Activated CD4-positive, alpha-beta memory T cell treated with anti-CD3 and anti-CD28 coated beads for 36 hours (primary cell): ENCODE measurements at regions of chr6 and their contacts with region 1.

Region 1: DNA sequence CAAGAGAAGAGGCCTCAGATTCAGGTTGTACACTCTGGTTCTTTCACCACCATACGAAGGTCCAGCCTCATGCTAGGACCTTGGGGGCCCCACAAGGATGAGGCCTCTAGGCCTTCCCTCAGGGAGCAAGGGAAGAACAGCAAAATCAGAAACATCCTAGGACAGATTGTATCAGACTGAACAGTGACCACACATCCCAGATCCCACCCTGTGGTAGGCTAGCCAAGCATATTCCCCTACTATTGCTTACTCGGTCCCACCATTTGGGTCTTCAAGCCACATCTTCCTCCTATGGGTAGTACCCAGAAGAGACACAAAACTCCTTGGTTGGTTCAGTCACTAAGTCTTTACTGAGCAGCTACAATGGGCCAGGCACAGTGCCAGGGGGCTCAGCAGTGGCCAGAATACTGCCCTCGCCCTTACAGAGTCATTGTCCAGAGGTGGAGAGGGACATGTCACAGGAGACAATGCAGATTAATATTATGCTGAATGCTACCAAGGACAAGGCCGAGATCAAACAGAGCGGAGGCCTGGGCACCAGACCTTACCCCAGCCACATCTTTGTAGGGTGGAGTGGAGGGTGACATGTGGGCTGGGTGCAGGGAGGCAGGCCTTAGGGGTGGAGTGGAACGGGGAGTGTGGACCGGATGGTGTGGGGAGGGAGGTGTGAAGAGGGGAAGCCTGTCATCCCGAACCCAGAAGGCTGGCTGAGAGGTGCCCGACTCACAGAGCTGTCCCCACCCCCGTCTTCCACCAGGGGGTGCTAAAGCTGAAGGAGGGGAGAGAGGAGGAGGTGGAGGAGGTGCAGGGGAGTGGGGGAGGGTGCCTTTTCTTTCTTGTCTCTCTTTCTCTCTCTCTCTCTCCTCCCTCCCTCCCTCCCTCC is 6.8 kb upstream of the MAPK13 start:
- DNase-seq: peak; percentile 96
- H3K4me3 Mint-ChIP-seq: no peak overlapping the region
- H3K27ac Mint-ChIP-seq: peak overlapping the region; percentile 59
- H3K4me1 Mint-ChIP-seq: peaks cover 78% of the 10 kb centered on the region
- H3K27me3 Mint-ChIP-seq: no peaks in the 10 kb centered on the region

Region 2: GRCh38 chr6:34236131-34236996 is 1887.1 kb before region 1 on chr6 and contains the start of gene HMGA1:
- CTCF ChIA-PET with region 1: no interaction called
- POLR2A ChIA-PET with region 1: no interaction called
- intact Hi-C with region 1: loop called (anchors 10 kb)
- DNase-seq: peak; percentile 91
- H3K4me3 Mint-ChIP-seq: peak within 1 kb of the TSS; percentile 88
- H3K27ac Mint-ChIP-seq: peak within 1 kb of the TSS; percentile 93
- H3K4me1 Mint-ChIP-seq: peaks cover 41% of the 10 kb centered on the region
- H3K27me3 Mint-ChIP-seq: no peaks in the 10 kb centered on the region
- total RNA-seq, gene HMGA1: 422 to 429 TPM

Region 3: DNA sequence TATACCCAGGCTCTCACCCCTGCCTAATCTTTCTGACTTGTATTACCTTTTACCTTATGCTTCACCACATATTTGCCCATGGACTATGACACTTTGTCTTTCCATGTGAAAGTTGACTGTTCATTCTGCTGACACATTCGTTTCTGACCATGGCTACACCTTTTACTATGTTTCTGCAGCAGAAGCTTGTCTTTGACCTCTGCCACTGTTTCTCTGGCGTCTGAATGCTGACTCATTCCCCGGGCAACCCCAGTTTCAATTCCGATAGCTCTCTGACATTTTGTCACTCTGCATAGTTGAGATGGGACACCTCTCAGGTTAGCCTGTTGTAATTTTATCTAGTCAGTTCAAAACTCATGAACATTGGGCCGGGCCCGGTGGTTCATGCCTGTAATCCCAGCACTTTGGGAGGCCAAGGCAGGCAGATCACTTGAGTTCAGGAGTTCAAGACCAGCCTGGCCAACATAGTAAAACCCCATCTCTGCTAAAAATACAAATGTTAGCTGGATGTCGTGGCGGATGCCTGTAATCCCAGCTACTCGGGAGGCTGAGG is 149.8 kb before region 1 on chr6:
- CTCF ChIA-PET with region 1: no interaction called
- POLR2A ChIA-PET with region 1: no interaction called
- intact Hi-C with region 1: no loop called
- DNase-seq: peak; percentile 82
- H3K4me3 Mint-ChIP-seq: no peak overlapping the region
- H3K27ac Mint-ChIP-seq: no peak overlapping the region
- H3K4me1 Mint-ChIP-seq: peaks cover 8% of the 10 kb centered on the region
- H3K27me3 Mint-ChIP-seq: no peaks in the 10 kb centered on the region

Region 4: GRCh38 chr6:36099872-36100483 is 23.5 kb before region 1 on chr6:
- CTCF ChIA-PET with region 1: interaction called, 14 read pairs
- POLR2A ChIA-PET with region 1: interaction called, 5 read pairs
- intact Hi-C with region 1: loop called (anchors 1 kb)
- DNase-seq: no peak
- H3K4me3 Mint-ChIP-seq: no peak overlapping the region
- H3K27ac Mint-ChIP-seq: peak overlapping the region; percentile 35
- H3K4me1 Mint-ChIP-seq: peaks cover 25% of the 10 kb centered on the region
- H3K27me3 Mint-ChIP-seq: no peaks in the 10 kb centered on the region

Region 5: GRCh38 chr6:36196880-36197548 is 73.5 kb after region 1 on chr6:
- CTCF ChIA-PET with region 1: interaction called, 7 read pairs
- POLR2A ChIA-PET with region 1: interaction called, 7 read pairs
- intact Hi-C with region 1: loop called (anchors 1 kb)
- DNase-seq: peak; percentile 100
- H3K4me3 Mint-ChIP-seq: peak overlapping the region; percentile 82
- H3K27ac Mint-ChIP-seq: peak overlapping the region; percentile 90
- H3K4me1 Mint-ChIP-seq: peaks cover 46% of the 10 kb centered on the region
- H3K27me3 Mint-ChIP-seq: no peaks in the 10 kb centered on the region

Region 6: DNA sequence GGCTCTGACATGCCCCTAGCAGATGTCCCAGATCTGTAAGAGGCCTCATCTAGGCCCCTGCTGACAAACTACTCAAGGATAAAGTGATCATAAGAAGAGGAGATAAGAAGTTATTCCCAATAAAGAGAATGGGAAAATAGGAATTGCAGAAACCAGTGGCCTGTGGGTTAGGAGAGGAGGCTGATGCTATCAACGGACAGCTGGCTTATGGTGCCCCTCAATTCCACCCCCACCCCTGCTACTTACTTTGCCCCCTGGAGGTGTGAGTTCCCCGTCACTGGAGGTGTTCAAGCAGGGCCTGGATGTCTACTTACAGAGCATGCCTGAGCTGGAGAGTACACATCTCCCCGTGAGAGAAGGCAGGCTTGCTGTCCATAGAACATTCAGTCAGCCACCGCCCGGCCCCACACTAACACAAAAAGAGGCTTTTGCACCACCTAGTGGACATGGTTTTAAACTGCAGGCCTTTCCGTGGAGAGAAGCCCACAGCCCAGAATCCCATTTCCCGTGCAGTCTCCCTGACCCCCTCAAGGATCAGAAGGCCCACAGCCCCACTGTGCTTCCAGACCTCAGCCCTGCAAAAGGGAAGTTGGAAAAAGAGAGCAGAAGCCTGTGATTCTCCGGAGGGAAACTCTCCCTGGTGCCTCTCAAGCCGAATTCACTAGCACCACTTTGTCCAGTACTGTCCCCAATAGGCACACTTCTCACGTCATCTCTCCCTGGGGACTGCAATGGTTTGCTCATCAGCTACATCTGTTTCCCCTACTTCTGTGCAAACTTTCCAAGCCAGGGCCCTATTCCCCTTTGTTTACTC is 236.9 kb after region 1 on chr6:
- CTCF ChIA-PET with region 1: interaction called, 8 read pairs
- POLR2A ChIA-PET with region 1: no interaction called
- intact Hi-C with region 1: loop called (anchors 5 kb)
- DNase-seq: peak; percentile 79
- H3K4me3 Mint-ChIP-seq: no peak overlapping the region
- H3K27ac Mint-ChIP-seq: no peak overlapping the region
- H3K4me1 Mint-ChIP-seq: peaks cover 24% of the 10 kb centered on the region
- H3K27me3 Mint-ChIP-seq: peaks cover 3% of the 10 kb centered on the region

Region 7: DNA sequence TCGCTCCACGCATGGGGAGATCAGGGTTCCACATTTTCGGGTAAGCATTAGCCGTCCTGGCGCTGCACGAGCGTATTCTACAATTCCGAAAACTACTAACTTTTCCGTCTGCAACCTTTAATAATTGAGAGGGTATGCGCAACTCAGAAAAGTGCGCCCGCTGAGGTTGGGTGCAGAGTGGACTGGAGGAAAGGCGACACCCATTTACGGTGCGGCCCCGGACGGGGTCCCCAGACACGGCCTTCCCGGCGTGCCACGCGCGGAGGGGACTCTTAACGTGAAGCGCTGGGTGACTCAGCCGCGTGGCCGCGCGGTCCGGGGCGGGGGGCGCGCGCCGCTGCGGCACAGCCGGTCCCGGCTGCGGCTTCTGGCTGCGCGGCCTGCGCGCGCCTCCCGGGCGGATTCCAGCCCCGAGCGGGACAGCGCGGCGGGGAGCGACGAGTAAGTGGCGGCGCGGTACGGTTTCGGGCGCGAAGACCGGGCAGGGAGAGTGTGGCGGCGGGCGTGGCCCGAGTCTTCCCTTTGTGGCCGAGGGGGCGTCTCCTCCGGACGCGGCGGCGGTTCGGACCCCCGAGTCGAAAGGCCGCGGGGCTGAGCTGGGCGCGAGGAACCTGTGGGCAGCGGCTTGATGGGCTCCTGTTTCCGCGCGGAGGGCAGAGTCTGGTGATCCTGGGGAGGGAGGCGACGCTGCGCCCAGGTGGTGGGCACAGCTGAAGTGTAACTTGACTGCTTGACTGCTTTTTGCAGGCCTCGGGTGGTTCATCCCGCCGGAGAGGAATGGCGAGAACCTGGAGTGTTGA is 319.4 kb after region 1 on chr6 and contains the starts of genes KCTD20 and PXT1:
- CTCF ChIA-PET with region 1: interaction called, 3 read pairs
- POLR2A ChIA-PET with region 1: no interaction called
- intact Hi-C with region 1: loop called (anchors 5 kb)
- DNase-seq: peak; percentile 93
- H3K4me3 Mint-ChIP-seq: peak within 1 kb of the TSS; percentile 97
- H3K27ac Mint-ChIP-seq: peak within 1 kb of the TSS; percentile 97
- H3K4me1 Mint-ChIP-seq: peaks cover 34% of the 10 kb centered on the region
- H3K27me3 Mint-ChIP-seq: no peaks in the 10 kb centered on the region
- total RNA-seq, gene KCTD20: 48.0 to 51.0 TPM
- total RNA-seq, gene PXT1: 0.22 to 0.29 TPM